ENCODE measurements at regions of chr5 and their contacts with region 1.

Region 1: GRCh38 chr5:151126199-151126645 is 31.4 kb downstream of the ANXA6 start:
- DNase-seq: peak; percentile 89
- H3K4me3 Mint-ChIP-seq: peak overlapping the region; percentile 20
- H3K27ac Mint-ChIP-seq: peak overlapping the region; percentile 82
- H3K4me1 Mint-ChIP-seq: peaks cover 38% of the 10 kb centered on the region
- H3K27me3 Mint-ChIP-seq: no peaks in the 10 kb centered on the region

Region 2: DNA sequence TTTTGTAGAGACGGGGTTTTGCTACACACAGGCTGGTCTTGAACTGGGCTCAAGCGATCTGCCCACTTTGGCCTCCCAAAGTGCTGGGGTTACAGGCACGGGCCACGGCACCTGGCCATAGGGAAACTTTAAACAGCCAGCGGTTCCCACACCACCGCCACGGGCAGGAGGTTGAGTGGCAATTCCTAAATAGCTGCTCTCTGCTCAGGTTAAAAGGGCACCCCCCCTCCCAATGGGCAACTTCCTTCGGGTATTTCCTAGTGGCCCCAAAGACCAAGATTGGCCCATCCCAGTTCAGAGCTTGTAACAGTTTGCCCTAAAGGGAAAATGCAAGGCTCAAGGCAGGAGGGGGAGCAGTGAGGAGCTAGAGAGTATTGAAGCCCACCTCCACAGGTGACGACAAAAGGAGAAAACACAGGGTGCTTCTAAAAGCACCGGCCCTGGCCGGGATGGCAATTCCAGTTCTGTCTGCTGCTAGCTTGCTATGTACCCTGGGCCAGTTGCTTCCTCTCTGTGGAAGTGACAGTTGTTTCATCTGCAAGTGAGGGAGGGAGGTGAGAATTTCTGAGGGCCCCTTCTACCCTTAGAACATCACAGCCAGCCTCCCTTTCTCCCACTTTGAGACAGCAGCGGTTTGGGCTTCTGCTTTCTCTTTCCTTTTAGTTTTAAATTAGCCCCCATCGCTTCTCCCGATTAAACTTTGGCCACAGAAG is 28.3 kb before region 1 on chr5:
- intact Hi-C with region 1: no loop called
- DNase-seq: peak; percentile 79
- H3K4me3 Mint-ChIP-seq: peak overlapping the region; percentile 50
- H3K27ac Mint-ChIP-seq: peak overlapping the region; percentile 76
- H3K4me1 Mint-ChIP-seq: peaks cover 69% of the 10 kb centered on the region
- H3K27me3 Mint-ChIP-seq: no peaks in the 10 kb centered on the region

Region 3: GRCh38 chr5:151141535-151141934 is 15.3 kb after region 1 on chr5:
- intact Hi-C with region 1: loop called (anchors 2 kb)
- DNase-seq: peak; percentile 89
- H3K4me3 Mint-ChIP-seq: peak overlapping the region; percentile 86
- H3K27ac Mint-ChIP-seq: peak overlapping the region; percentile 87
- H3K4me1 Mint-ChIP-seq: peaks cover 79% of the 10 kb centered on the region
- H3K27me3 Mint-ChIP-seq: no peaks in the 10 kb centered on the region

Region 4: GRCh38 chr5:151164686-151165392 is 38.6 kb after region 1 on chr5:
- intact Hi-C with region 1: loop called (anchors 1 kb)
- DNase-seq: peak; percentile 95
- H3K4me3 Mint-ChIP-seq: no peak overlapping the region
- H3K27ac Mint-ChIP-seq: no peak overlapping the region
- H3K4me1 Mint-ChIP-seq: peaks cover 12% of the 10 kb centered on the region
- H3K27me3 Mint-ChIP-seq: no peaks in the 10 kb centered on the region

Region 5: GRCh38 chr5:151202381-151203139 is 76.3 kb after region 1 on chr5:
- intact Hi-C with region 1: no loop called
- DNase-seq: no peak
- H3K4me3 Mint-ChIP-seq: peak overlapping the region; percentile 50
- H3K27ac Mint-ChIP-seq: peak overlapping the region; percentile 80
- H3K4me1 Mint-ChIP-seq: peaks cover 32% of the 10 kb centered on the region
- H3K27me3 Mint-ChIP-seq: no peaks in the 10 kb centered on the region

Region 6: DNA sequence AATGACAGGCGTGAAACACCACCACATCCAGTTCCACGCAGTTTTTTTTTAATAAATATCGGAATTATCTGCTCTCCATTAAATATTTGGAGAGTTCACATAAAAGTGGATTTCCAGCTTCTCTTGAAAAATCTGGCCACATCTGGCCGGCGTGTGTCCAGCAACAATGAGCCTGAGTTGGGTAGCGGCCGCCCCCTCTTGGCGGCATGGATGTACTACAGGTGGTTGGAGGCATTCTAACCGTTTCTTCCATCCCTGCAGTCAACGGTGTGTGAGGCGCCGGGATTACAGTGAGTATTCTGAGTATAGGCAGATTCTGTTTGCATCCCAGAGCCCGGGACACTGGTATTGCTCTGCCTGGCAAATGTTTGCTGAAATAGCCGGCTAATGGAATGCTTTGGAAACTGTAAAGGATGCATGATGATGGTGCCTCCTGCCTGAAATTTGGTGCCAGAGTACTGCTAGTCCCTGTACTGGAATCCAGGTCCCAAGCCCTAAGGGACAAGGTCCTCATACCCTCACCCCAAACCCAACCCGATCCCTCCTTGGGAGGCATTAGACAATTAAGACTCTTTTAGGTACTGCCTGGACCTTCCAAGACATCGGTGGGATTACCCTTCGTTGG is 113.1 kb after region 1 on chr5:
- intact Hi-C with region 1: loop called (anchors 5 kb)
- DNase-seq: peak; percentile 80
- H3K4me3 Mint-ChIP-seq: no peak overlapping the region
- H3K27ac Mint-ChIP-seq: no peak overlapping the region
- H3K4me1 Mint-ChIP-seq: peaks cover 21% of the 10 kb centered on the region
- H3K27me3 Mint-ChIP-seq: no peaks in the 10 kb centered on the region

Region 7: DNA sequence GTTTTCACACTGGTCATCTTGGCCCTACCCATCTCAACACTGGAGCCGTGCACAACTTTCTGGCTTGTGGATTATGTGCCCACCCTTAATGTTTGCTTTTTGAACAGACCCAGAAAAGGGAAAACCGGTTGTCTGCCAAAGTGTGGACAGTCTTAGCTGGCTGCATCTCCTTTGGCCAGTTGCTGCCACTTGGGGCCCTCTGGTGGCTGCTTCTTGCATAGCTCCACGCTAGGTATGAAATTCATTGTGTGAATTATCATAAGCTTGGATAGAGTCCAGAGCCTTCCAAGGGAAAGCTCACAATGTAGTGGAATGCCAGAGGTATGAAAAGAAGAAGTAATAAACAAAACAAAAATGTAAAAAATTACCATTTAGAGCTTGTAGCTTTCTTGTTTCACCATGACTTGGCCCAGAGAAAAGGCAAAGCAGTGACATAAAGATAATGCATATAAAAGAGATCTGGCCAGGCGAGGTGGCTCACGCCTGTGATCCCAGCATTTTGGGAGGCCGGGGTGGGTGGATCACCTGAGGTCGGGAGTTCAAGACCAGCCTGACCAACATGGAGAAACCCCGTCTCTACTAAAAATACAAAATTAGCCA is 189.9 kb after region 1 on chr5:
- intact Hi-C with region 1: loop called (anchors 5 kb)
- DNase-seq: peak; percentile 84
- H3K4me3 Mint-ChIP-seq: no peak overlapping the region
- H3K27ac Mint-ChIP-seq: no peak overlapping the region
- H3K4me1 Mint-ChIP-seq: no peaks in the 10 kb centered on the region
- H3K27me3 Mint-ChIP-seq: peaks cover 12% of the 10 kb centered on the region

Measured in activated CD4-positive, alpha-beta T cell treated with anti-CD3 and anti-CD28 coated beads, Interleukin-2, amount 10 ng/mL, durations not matched to agents 24 days and 14 days (primary cell).